OCI-LY7 (cell line): ENCODE measurements at regions of chr13 and their contacts with region 1.

Region 1: GRCh38 chr13:53782488-53782961 is 753.9 kb downstream of the OLFM4 start:
- DNase-seq: peak; percentile 50
- H3K4me3 ChIP-seq: no peak overlapping the region
- H3K27ac ChIP-seq: no peak overlapping the region
- H3K4me1 ChIP-seq: no peaks in the 10 kb centered on the region
- CTCF ChIP-seq: peak; percentile 85

Region 2: DNA sequence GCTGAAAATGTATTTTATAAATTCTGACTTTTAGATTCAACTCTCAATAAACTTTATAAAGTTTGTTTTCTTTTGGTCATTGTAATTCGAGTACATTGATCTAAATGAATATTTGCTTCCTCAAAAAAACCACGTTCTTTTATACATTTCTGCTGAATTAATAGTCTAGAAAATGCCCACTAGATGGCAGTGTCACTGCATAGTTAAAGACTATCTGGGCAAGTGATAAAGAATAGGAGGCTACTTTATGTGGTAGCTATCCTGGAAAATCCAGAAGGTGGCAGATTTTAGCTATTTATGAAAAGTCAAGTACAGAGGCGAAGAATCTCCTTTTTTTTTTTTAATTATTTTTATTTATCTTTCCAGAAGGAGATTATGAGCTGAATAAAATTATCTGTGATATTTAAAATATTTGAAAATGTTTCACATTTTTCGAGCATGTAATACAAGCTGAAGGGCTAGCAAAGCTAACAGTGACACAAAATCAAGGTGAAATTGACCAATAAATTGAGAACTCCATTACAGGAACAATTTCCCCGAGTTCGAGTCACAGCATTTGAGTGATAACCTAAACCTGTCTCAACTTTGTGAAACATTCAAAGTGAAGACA is 532.2 kb before region 1 on chr13:
- CTCF ChIA-PET with region 1: no interaction called
- POLR2A ChIA-PET with region 1: no interaction called
- intact Hi-C with region 1: loop called (anchors 5 kb)
- DNase-seq: peak; percentile 79
- H3K4me3 ChIP-seq: no peak overlapping the region
- H3K27ac ChIP-seq: no peak overlapping the region
- H3K4me1 ChIP-seq: no peaks in the 10 kb centered on the region
- CTCF ChIP-seq: peak; percentile 98

Region 3: GRCh38 chr13:55245005-55245644 is 1462.6 kb after region 1 on chr13:
- CTCF ChIA-PET with region 1: no interaction called
- POLR2A ChIA-PET with region 1: no interaction called
- intact Hi-C with region 1: loop called (anchors 5 kb)
- DNase-seq: no peak
- H3K4me3 ChIP-seq: no peak overlapping the region
- H3K27ac ChIP-seq: no peak overlapping the region
- H3K4me1 ChIP-seq: no peaks in the 10 kb centered on the region
- CTCF ChIP-seq: peak; percentile 36; the same call in 1 of the 2 replicates